ENCODE measurements at regions of chr10 and their contacts with region 1.

Region 1: DNA sequence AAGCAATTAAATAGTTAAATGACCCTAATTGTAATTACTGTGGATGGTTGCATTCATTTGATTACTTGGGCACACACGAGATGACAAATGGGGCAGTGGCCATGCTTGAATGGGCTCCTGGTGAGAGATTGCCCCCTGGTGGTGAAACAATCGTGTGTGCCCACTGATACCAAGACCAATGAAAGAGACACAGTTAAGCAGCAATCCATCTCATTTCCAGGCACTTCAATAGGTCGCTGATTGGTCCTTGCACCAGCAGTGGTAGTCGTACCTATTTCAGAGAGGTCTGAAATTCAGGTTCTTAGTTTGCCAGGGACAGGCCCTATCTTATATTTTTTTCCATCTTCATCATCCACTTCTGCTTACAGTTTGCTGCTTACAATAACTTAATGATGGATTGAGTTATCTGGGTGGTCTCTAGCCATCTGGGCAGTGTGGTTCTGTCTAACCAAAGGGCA is 8.3 kb downstream of the PCBD1 start:
- DNase-seq: peak; percentile 78
- CTCF ChIP-seq: peak; percentile 91

Region 2: GRCh38 chr10:70549962-70550458 is 330.1 kb before region 1 on chr10:
- CTCF ChIA-PET with region 1: interaction called, 35 read pairs
- POLR2A ChIA-PET with region 1: no interaction called
- DNase-seq: peak; percentile 83
- CTCF ChIP-seq: peak; percentile 74

Region 3: GRCh38 chr10:70866424-70866823 is 13.7 kb before region 1 on chr10:
- CTCF ChIA-PET with region 1: interaction called, 24 read pairs
- POLR2A ChIA-PET with region 1: no interaction called
- DNase-seq: no peak
- CTCF ChIP-seq: no peak

Region 4: DNA sequence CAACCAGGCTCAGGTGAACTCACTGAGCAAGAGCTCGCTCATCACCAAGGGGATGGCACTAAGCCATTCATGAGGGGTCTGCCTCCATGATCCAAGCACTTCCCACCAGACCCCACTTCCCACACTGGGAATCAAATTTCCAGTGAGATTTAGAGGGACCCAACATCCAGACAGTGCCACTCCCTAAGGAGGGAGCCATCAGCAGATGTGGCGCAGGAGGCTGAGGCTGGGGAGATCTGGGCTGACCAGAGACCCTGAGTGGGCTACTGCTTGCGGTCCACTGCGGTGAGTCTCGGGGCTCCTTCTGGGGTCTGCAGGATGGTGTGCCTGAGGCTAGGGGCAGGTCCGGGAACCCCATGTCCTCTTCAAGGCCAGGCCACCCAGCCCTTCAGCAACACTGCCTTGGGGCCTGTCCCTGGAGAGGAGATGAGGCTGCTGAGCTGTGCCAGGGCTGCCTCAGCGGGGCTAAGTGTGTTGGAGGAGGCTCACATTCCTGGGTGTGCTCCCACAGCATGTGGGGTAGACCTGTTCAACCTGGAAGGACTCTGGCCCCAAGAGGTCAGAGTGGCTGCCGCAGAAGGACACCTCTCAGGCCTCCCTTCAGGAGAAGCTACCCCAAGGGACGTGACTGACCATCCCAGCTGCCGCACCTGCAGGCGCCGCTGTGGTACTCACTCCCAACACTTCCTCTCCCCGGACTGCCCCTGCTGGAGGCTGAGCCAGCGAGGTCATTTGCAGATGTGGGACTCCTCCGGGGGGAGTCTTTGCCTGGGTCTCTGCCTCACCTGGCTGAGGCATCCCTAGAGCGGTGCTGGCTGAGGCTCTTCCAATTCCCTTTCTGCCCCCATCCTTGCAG is 30.6 kb after region 1 on chr10:
- CTCF ChIA-PET with region 1: no interaction called
- POLR2A ChIA-PET with region 1: no interaction called
- DNase-seq: no peak
- CTCF ChIP-seq: no peak

Region 5: DNA sequence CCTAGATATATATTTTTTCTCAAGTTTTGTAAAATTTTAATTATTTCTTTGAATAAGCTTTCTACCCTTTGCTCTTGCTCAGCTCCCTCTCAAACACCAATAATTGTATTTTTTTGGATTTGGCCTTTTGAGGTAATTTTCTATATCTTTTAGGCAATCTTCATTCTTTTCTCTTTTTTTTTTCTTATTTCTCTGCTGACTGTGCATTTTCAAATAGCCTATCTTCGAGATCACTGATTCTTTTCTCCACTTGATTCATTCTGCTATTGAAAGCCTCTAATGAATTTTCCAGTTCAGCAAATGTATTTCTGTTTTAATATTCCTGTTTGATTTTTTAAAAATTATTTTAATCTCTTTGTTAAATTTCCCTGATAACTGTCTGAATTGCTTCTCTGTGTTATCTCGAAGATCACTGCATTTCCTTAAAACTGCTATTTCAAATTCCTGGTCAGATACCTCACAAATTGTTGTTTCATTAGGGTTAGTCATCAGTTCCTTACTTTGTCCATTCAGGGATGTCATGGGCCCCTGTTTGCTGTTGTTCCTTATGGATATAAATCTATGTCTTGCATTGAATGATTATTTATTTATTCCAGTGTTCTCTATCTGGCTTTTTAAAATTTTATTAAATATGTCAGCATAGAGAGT is 232.2 kb after region 1 on chr10:
- CTCF ChIA-PET with region 1: no interaction called
- POLR2A ChIA-PET with region 1: no interaction called
- DNase-seq: no peak
- CTCF ChIP-seq: no peak

Measured in GM10248 (cell line).